Dorsolateral prefrontal cortex (tissue), 120 donors: ENCODE measurements at regions of chr9 and their contacts with region 1.

Region 1: GRCh38 chr9:95004411-95005277 is 278.1 kb downstream of the AOPEP start:
- DNase-seq: peak in 5 of 10 donors; percentile 44 to 67 (median 60)
- H3K4me3 ChIP-seq: peak overlapping the region; percentile 56 to 90 (median 80)
- H3K27ac ChIP-seq: peak overlapping the region; percentile 75 to 98 (median 94)
- H3K27me3 ChIP-seq: no peaks in the 10 kb centered on the region
- CTCF ChIP-seq: peak in 5 of 56 donors; percentile 0 to 3 (median 2)

Region 2: GRCh38 chr9:94912700-94913249 is 91.9 kb before region 1 on chr9:
- intact Hi-C with region 1: loop called in 1 of 2 experiments (anchors 5 kb)
- DNase-seq: peak in 1 of 10 donors; percentile 7
- H3K4me3 ChIP-seq: no peak overlapping the region
- H3K27ac ChIP-seq: peak overlapping the region; percentile 78 to 100 (median 94)
- H3K27me3 ChIP-seq: no peaks in the 10 kb centered on the region
- CTCF ChIP-seq: no peak

Region 3: DNA sequence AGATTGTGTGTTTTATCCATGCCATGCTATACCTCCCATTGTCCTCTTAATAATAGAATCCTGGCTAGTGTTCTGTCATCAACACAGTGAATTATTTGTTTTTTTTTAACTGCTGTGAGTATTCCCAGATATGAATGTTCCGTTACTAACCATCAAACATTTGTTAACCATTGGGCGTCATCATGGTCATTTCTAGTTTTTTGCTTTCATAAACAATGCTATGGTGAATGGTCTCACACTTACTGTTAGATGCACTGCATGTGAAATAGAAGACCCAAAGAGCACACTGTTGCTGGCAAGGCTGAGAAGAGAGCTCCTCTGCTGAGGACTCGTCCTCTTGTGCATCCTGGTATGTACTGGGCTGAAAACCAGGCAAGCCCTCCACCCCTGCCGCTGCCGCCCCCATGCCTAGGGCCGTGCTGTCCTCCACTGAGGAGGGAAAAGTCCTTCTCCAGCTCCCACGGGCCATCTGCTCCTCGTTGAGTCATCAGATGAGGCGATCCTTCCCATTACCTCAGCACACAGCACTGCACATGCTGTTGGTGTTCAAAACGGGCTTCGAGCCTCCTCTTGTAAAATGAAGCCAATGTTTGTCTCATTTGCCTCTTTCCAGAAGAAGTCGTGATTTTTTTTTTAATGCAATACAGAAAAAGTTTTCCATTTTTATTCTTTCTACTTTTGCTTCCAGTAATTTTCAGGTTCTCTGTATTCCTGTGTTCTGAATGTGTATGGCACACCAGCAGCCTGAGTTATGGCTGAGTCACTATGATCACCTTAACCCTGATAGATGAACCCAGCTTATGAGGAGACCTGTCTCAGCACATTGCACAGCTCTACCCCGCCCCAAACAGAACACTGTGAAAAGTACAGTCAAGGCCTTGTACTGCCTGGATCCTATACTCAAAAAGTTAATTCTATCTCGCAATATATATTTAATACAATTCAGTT is 59.2 kb before region 1 on chr9:
- intact Hi-C with region 1: loop called (anchors 5 kb)
- DNase-seq: peak; percentile 56 to 94 (median 84)
- H3K4me3 ChIP-seq: peak overlapping the region in 14 of 59 donors; percentile 1 to 43 (median 20)
- H3K27ac ChIP-seq: peak overlapping the region; percentile 57 to 96 (median 85)
- H3K27me3 ChIP-seq: no peaks in the 10 kb centered on the region
- CTCF ChIP-seq: peak in 1 of 56 donors; percentile 10

Region 4: GRCh38 chr9:94952565-94953373 is 51.9 kb before region 1 on chr9:
- intact Hi-C with region 1: loop called (anchors 5 kb)
- DNase-seq: peak in 1 of 10 donors; percentile 39
- H3K4me3 ChIP-seq: peak overlapping the region in 6 of 59 donors; percentile 1 to 40 (median 9)
- H3K27ac ChIP-seq: peak overlapping the region; percentile 29 to 97 (median 88)
- H3K27me3 ChIP-seq: no peaks in the 10 kb centered on the region
- CTCF ChIP-seq: no peak

Region 5: DNA sequence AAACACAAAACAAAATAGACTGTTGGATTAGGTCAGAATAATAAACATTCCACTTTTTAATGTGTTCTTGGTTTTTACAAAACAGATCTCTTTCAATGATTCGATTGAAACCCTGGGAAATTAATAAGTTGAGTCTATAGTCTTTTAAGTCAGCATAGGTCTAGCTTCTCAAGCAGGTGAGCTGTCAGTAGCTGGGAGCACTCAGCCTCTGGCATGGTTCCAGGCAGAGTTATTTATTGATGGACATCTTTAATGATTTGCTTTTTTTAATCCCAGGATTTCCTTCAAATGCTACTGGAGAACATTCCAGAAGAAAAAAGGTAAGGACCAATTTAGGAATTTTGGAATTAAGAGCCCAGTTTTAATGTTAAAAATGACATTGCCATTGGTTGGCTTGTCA is 37.2 kb before region 1 on chr9:
- intact Hi-C with region 1: loop called in 1 of 2 experiments (anchors 5 kb)
- DNase-seq: no peak
- H3K4me3 ChIP-seq: no peak overlapping the region
- H3K27ac ChIP-seq: peak overlapping the region in 12 of 59 donors; percentile 4 to 87 (median 79)
- H3K27me3 ChIP-seq: no peaks in the 10 kb centered on the region
- CTCF ChIP-seq: no peak

Region 6: GRCh38 chr9:95087659-95088242 is 83.1 kb after region 1 on chr9:
- intact Hi-C with region 1: loop called in 1 of 2 experiments (anchors 10 kb)
- DNase-seq: peak in 4 of 10 donors; percentile 25 to 41 (median 34)
- H3K4me3 ChIP-seq: no peak overlapping the region
- H3K27ac ChIP-seq: peak overlapping the region in 55 of 59 donors; percentile 6 to 100 (median 96)
- H3K27me3 ChIP-seq: no peaks in the 10 kb centered on the region
- CTCF ChIP-seq: peak in 2 of 56 donors; percentile 5 to 16